ENCODE measurements at regions of chr1 and their contacts with region 1.

Region 1: GRCh38 chr1:68197891-68198290 is 34.4 kb downstream of the WLS start:
- DNase-seq: no peak
- H3K4me3 ChIP-seq: no peak overlapping the region
- H3K27ac ChIP-seq: no peak overlapping the region
- H3K27me3 ChIP-seq: no peaks in the 10 kb centered on the region
- CTCF ChIP-seq: no peak

Region 2: GRCh38 chr1:68136186-68136585 is 61.7 kb before region 1 on chr1:
- CTCF ChIA-PET with region 1: no interaction called
- POLR2A ChIA-PET with region 1: no interaction called
- DNase-seq: no peak
- H3K4me3 ChIP-seq: no peak overlapping the region
- H3K27ac ChIP-seq: no peak overlapping the region
- H3K27me3 ChIP-seq: no peaks in the 10 kb centered on the region
- CTCF ChIP-seq: no peak

Region 3: GRCh38 chr1:68181165-68181556 is 16.7 kb before region 1 on chr1:
- CTCF ChIA-PET with region 1: no interaction called
- POLR2A ChIA-PET with region 1: no interaction called
- DNase-seq: no peak
- H3K4me3 ChIP-seq: no peak overlapping the region
- H3K27ac ChIP-seq: no peak overlapping the region
- H3K27me3 ChIP-seq: no peaks in the 10 kb centered on the region
- CTCF ChIP-seq: no peak

Region 4: GRCh38 chr1:68213843-68214242 is 16.0 kb after region 1 on chr1:
- CTCF ChIA-PET with region 1: interaction called, 10 read pairs
- POLR2A ChIA-PET with region 1: no interaction called
- DNase-seq: no peak
- H3K4me3 ChIP-seq: no peak overlapping the region
- H3K27ac ChIP-seq: no peak overlapping the region
- H3K27me3 ChIP-seq: no peaks in the 10 kb centered on the region
- CTCF ChIP-seq: no peak